ENCODE measurements at regions of chr7 and their contacts with region 1.

Region 1: GRCh38 chr7:19107356-19108146 is 9.9 kb downstream of the TWIST1 start:
- DNase-seq: no peak
- H3K4me3 ChIP-seq: peak overlapping the region in 3 of 4 donors; percentile 17 to 50 (median 21)
- H3K27ac ChIP-seq: no peak overlapping the region
- H3K4me1 ChIP-seq: peaks cover 0 to 21% (median 5%) of the 10 kb centered on the region in 4 donors
- H3K27me3 ChIP-seq: peaks cover 89% of the 10 kb centered on the region
- CTCF ChIP-seq: no peak
- EP300 ChIP-seq: no peak
- POLR2A ChIP-seq: no peak

Region 2: DNA sequence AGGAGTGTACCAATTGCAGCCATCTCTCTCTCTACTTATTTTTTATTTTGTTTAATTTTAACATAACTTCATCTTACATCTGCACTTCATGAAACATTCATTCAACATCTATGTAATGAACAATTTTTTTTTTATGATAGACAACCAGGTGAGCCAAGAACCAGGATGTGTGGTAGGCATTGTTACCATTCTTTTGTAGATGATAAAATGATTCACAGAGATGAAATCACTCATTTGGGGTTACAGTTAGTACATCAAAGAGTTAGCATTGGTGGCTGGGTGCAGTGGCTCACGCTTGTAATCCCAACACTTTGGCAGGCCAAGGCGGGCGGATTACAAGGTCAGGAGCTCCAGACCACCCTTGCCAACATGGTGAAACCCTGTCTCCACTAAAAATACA is 484.2 kb before region 1 on chr7:
- in situ Hi-C with region 1: no loop called
- intact Hi-C with region 1: no loop called
- DNase-seq: no peak
- H3K4me3 ChIP-seq: no peak overlapping the region
- H3K27ac ChIP-seq: no peak overlapping the region
- H3K4me1 ChIP-seq: no peaks in the 10 kb centered on the region
- H3K27me3 ChIP-seq: no peaks in the 10 kb centered on the region
- CTCF ChIP-seq: no peak
- EP300 ChIP-seq: no peak
- POLR2A ChIP-seq: no peak

Region 3: DNA sequence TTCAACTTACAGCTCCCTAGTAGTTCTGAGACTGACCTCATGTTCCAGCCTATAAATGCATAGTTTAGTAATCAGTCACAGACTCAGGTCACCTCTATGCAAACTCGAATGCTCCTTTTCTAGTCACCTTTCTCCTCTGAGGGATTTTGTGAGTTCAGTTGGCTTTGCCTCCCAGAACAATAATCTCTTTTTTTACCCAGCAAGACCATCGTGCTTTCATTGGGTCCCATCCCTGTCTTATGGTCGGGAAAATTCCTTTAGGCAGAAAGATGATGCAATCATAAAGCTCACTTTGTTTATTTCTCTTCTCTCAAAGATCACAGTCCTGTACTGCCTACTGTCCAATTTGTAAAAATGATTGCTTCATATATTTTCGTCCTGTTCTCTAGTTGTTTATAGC is 28.5 kb before region 1 on chr7:
- in situ Hi-C with region 1: no loop called
- intact Hi-C with region 1: loop called (anchors 1 kb)
- DNase-seq: no peak
- H3K4me3 ChIP-seq: no peak overlapping the region
- H3K27ac ChIP-seq: no peak overlapping the region
- H3K4me1 ChIP-seq: no peaks in the 10 kb centered on the region
- H3K27me3 ChIP-seq: no peaks in the 10 kb centered on the region
- CTCF ChIP-seq: no peak
- EP300 ChIP-seq: no peak
- POLR2A ChIP-seq: no peak

Region 4: DNA sequence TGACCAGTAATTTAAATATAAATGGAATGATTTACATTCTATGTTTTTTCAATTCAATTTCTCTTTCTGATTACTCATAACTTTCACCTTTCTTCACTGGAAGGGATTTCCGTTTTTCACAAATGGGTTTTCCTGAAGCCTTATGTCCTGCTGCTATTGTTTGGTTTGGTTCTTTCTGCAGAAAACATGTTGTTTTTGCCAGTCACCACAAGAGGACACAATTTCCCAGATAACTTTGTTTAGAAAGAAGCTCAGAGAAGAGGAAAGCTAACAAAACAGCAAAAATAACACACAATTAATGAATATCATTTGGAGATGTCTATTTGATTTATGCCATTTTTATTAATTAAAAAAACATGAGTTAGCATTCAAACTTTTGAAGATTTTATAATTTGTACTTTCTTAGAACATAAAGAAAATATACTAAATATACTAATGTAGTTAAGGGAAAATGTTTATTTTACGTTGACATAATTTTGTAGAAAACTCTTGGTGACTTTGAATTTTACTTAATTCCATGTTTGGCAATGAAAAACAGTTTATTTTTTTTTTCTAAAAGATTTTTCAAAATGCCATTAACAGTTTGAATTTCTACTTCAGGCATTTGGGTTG is 14.5 kb after region 1 on chr7:
- in situ Hi-C with region 1: no loop called
- intact Hi-C with region 1: loop called (anchors 2 kb)
- DNase-seq: no peak
- H3K4me3 ChIP-seq: no peak overlapping the region
- H3K27ac ChIP-seq: no peak overlapping the region
- H3K4me1 ChIP-seq: peaks cover 0 to 14% (median 6%) of the 10 kb centered on the region in 4 donors
- H3K27me3 ChIP-seq: peaks cover 71% of the 10 kb centered on the region
- CTCF ChIP-seq: peak in 2 of 5 experiments; percentile 10 to 19
- EP300 ChIP-seq: no peak
- POLR2A ChIP-seq: no peak

Region 5: DNA sequence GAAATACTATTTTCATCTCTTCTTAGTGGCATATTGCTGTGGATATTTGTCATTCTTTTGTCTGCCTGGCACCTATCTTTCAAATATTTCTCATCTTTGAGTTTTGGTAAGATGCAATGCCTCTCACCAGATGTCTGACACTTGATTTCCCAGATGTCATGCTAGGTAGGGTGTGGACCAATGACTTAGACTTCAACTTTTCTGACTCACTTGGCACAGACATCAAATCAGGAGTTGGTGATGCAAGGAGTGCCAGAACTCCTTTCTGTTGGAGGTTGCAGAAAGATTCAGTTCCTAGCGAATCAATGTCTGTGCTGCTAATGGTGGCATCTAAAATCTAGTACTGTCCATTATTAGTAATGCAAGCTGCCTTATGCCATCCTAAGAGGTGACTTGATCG is 254.5 kb after region 1 on chr7:
- in situ Hi-C with region 1: no loop called
- intact Hi-C with region 1: no loop called
- DNase-seq: no peak
- H3K4me3 ChIP-seq: no peak overlapping the region
- H3K27ac ChIP-seq: no peak overlapping the region
- H3K4me1 ChIP-seq: no peaks in the 10 kb centered on the region
- H3K27me3 ChIP-seq: no peaks in the 10 kb centered on the region
- CTCF ChIP-seq: no peak
- EP300 ChIP-seq: no peak
- POLR2A ChIP-seq: no peak

Region 6: DNA sequence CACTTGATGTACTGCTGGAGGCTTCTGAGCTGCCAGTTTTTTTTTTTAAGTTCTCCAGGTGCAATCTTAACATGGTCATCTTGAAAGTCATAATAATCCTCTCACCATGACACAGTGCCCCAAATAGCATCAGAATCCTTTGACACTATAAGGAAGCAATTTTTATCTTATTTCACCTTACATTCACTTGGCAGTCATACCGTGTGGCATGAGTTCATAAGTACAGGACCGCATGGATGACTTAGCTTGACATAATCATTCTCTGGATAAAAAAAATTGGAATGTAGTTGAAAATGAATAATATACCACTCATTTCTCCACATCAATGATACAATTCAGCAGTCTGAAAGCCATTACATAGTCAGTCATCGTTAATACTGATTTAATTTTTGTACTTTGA is 691.4 kb after region 1 on chr7:
- in situ Hi-C with region 1: no loop called
- intact Hi-C with region 1: no loop called
- DNase-seq: no peak
- H3K4me3 ChIP-seq: no peak overlapping the region
- H3K27ac ChIP-seq: no peak overlapping the region
- H3K4me1 ChIP-seq: no peaks in the 10 kb centered on the region
- H3K27me3 ChIP-seq: no peaks in the 10 kb centered on the region
- CTCF ChIP-seq: no peak
- EP300 ChIP-seq: no peak
- POLR2A ChIP-seq: no peak

Measured in transverse colon (tissue), 4 donors.